Caco-2 (cell line): ENCODE measurements at regions of chr15 and their contacts with region 1.

Region 1: DNA sequence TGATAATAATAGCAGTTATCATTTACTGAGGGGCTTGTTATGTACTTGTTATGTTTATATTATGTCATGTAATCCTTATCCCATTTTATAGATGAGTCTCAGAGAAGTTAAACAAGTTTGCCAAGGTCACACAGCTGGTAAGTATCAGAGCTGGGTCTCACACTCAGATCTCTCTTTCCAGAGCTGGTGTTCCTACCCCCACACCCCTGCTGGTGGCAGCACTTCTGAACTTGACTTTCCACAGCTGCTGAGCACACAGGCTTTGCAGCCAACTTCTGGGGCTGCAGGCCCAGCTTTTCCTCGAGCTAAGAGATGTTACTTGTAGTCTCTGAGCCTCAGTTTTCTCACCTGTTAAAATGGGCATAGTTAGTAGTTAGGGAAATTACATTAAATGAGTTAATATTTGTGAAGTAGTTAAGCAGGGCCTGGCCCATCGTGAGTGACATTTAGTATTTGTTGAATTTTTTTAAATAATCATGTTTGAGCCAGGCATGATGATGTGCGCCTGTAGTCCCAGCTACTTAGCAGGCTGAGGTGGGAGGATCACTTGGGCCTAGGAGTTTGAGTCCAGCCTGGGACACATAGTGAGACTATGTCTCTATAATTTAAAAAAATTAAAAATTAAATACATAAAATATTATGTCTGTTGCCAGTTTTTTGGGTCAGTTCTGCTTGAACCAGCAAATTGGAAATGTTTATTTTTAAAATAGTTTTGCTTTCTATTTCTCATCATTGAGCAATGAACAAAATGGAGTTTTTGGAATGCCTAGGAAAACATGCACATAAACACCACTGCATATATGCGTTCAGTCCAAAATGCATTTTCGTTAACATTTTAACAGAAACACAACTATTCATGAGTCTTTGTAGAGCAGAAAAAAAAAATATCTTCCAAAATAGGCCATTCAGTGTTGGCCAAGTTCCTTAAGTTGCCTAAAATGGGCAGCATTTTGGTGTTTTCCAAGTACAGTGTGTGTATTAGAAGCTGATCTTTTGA is 87.3 kb downstream of the SMAD6 start:
- DNase-seq: no peak
- H3K4me3 ChIP-seq: no peak overlapping the region
- H3K4me3 Mint-ChIP-seq: no peak overlapping the region
- H3K27ac Mint-ChIP-seq: no peak overlapping the region
- H3K4me1 ChIP-seq: no peaks in the 10 kb centered on the region
- H3K4me1 Mint-ChIP-seq: no peaks in the 10 kb centered on the region
- H3K27me3 ChIP-seq: no peaks in the 10 kb centered on the region
- H3K27me3 Mint-ChIP-seq: no peaks in the 10 kb centered on the region
- CTCF ChIP-seq: peak in 1 of 2 experiments; percentile 49

Region 2: GRCh38 chr15:66803182-66803729 is 13.9 kb after region 1 on chr15:
- CTCF ChIA-PET with region 1: no interaction called
- POLR2A ChIA-PET with region 1: no interaction called
- intact Hi-C with region 1: loop called (anchors 2 kb)
- DNase-seq: peak; percentile 88 to 90
- H3K4me3 ChIP-seq: no peak overlapping the region
- H3K4me3 Mint-ChIP-seq: peak overlapping the region; percentile 24
- H3K27ac Mint-ChIP-seq: peak overlapping the region; percentile 77
- H3K4me1 ChIP-seq: peaks cover 22% of the 10 kb centered on the region
- H3K4me1 Mint-ChIP-seq: peaks cover 16% of the 10 kb centered on the region
- H3K27me3 ChIP-seq: no peaks in the 10 kb centered on the region
- H3K27me3 Mint-ChIP-seq: no peaks in the 10 kb centered on the region
- CTCF ChIP-seq: no peak

Region 3: GRCh38 chr15:66851226-66852071 is 62.1 kb after region 1 on chr15:
- CTCF ChIA-PET with region 1: interaction called, 29 read pairs
- POLR2A ChIA-PET with region 1: no interaction called
- intact Hi-C with region 1: no loop called
- DNase-seq: peak; percentile 86 to 87
- H3K4me3 ChIP-seq: no peak overlapping the region
- H3K4me3 Mint-ChIP-seq: peak overlapping the region; percentile 47
- H3K27ac Mint-ChIP-seq: peak overlapping the region; percentile 50
- H3K4me1 ChIP-seq: peaks cover 23% of the 10 kb centered on the region
- H3K4me1 Mint-ChIP-seq: peaks cover 19% of the 10 kb centered on the region
- H3K27me3 ChIP-seq: no peaks in the 10 kb centered on the region
- H3K27me3 Mint-ChIP-seq: no peaks in the 10 kb centered on the region
- CTCF ChIP-seq: peak; percentile 85 to 93